ENCODE measurements at regions of chr20 and their contacts with region 1.

Region 1: GRCh38 chr20:45095753-45096371 is 5.1 kb downstream of the KCNS1 start:
- DNase-seq: peak; percentile 31 to 81 (median 46)
- ATAC-seq: peak; percentile 58
- H3K4me3 ChIP-seq: no peak overlapping the region
- H3K4me3 Mint-ChIP-seq: peak overlapping the region; percentile 15
- H3K27ac ChIP-seq: no peak overlapping the region
- H3K27ac Mint-ChIP-seq: no peak overlapping the region
- H3K4me1 ChIP-seq: peaks cover 13% of the 10 kb centered on the region
- H3K4me1 Mint-ChIP-seq: peaks cover 16% of the 10 kb centered on the region
- H3K27me3 ChIP-seq: peaks cover 25 to 43% of the 10 kb centered on the region in 2 experiments
- H3K27me3 Mint-ChIP-seq: peaks cover 44% of the 10 kb centered on the region
- CTCF ChIP-seq: peak; percentile 72

Region 2: GRCh38 chr20:44938637-44939036 is 157.2 kb before region 1 on chr20:
- CTCF ChIA-PET with region 1: interaction called, 3 read pairs
- POLR2A ChIA-PET with region 1: no interaction called
- intact Hi-C with region 1: loop called in 1 of 2 experiments (anchors 5 kb)
- DNase-seq: no peak
- ATAC-seq: no peak
- H3K4me3 ChIP-seq: no peak overlapping the region
- H3K4me3 Mint-ChIP-seq: no peak overlapping the region
- H3K27ac ChIP-seq: no peak overlapping the region
- H3K27ac Mint-ChIP-seq: peak overlapping the region; percentile 47
- H3K4me1 ChIP-seq: no peaks in the 10 kb centered on the region
- H3K4me1 Mint-ChIP-seq: no peaks in the 10 kb centered on the region
- H3K27me3 ChIP-seq: no peaks in the 10 kb centered on the region
- H3K27me3 Mint-ChIP-seq: no peaks in the 10 kb centered on the region
- CTCF ChIP-seq: no peak

Region 3: DNA sequence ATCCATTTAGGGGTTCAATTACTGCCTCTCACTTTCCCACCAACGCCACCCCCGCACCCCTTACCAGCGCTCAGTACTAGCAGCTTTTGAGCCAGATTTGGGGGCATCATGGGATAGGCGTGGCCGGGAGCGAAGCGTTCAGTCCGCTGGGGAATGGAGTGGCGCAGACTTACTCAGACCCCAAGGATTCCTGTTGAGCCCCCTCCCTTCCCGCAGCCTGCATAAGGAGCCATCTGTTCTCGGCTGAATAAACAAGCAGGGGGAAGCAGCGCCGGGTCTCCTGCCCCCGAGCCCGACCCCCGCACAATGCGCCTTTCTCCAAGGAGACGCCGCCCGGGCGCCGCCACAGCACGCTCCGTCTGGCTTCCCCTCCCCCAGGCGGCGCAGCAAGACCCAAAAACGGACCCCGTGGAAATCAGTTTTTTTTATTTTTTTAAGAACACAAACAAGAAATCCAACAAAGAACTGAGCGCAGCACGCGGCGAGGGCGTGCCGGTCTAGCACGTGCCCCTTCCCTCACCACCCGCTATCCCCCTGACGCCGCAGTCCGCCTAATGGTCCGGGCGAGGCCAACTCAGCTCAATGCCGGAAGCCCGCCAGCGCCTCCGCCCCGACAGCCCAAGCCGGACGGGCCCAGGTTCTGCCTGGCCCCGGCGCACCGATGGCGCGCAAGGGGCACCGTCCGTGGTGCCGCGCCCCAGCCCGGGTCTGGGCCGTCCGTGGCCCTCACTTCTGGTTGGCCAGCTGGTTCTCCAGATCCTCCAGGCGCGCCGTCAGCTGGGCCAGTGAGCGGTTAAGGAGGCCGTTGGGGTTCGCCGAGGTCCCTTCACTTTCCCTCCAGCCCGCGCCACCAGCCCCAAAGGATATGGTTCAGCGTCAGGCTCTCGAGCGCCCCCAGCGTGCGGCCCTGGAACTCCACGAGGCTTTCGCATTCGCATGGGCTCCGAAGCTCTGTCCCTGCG is 197.5 kb after region 1 on chr20:
- CTCF ChIA-PET with region 1: no interaction called
- POLR2A ChIA-PET with region 1: no interaction called
- intact Hi-C with region 1: loop called in 1 of 2 experiments (anchors 2 kb)
- DNase-seq: peak; percentile 63 to 84 (median 74)
- ATAC-seq: peak; percentile 92
- H3K4me3 ChIP-seq: peak overlapping the region; percentile 40
- H3K4me3 Mint-ChIP-seq: peak overlapping the region; percentile 82
- H3K27ac ChIP-seq: no peak overlapping the region
- H3K27ac Mint-ChIP-seq: no peak overlapping the region
- H3K4me1 ChIP-seq: peaks cover 17% of the 10 kb centered on the region
- H3K4me1 Mint-ChIP-seq: no peaks in the 10 kb centered on the region
- H3K27me3 ChIP-seq: peaks cover 15 to 23% of the 10 kb centered on the region in 2 experiments
- H3K27me3 Mint-ChIP-seq: peaks cover 66% of the 10 kb centered on the region
- CTCF ChIP-seq: peak; percentile 95